Endothelial cell of umbilical vein (primary cell): ENCODE measurements at regions of chr3 and their contacts with region 1.

Region 1: GRCh38 chr3:121979734-121980449 is 42.2 kb downstream of the ILDR1 start:
- DNase-seq: no peak
- H3K4me3 ChIP-seq: no peak overlapping the region
- H3K27ac ChIP-seq: no peak overlapping the region
- H3K4me1 ChIP-seq: no peaks in the 10 kb centered on the region
- H3K27me3 ChIP-seq: peaks cover 0 to 2% of the 10 kb centered on the region in 2 experiments
- CTCF ChIP-seq: no peak
- POLR2A ChIP-seq: no peak

Region 2: DNA sequence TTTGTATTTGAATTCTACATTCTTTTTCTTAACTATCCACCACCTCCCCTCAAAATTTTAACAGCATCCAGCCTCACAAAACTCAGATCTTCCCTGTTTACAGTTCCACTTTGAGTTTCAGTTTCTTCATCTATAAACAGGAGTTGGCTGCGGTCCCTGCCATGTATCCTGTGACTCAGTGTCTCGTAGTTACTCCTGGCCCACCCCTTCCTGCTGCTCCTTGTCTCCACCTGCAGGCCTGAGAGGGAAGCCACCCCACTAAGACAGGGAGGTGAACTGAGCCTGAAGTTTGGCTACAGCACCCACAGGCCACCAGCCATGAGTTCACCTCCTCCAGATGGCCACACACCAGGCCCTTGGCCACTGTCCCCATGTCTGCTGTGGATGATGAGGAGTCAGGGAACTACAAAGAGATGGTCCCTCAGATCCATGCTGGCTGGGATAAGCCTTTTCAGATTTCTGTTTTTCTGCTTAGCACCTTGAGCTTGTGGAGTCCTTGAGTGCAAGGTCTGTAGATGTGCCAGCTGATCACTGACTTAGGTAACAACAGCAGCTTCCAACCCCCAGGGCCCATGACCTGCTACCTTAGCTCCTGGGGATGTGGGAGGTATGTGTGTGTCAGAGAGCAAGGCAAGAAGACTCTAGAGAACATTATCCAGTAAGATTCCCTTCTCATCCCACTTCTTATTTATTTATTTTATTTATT is 112.7 kb after region 1 on chr3:
- CTCF ChIA-PET with region 1: interaction called, 18 read pairs
- POLR2A ChIA-PET with region 1: no interaction called
- dilution Hi-C with region 1: no loop called
- intact Hi-C with region 1: loop called (anchors 1 kb)
- DNase-seq: peak; percentile 34
- H3K4me3 ChIP-seq: no peak overlapping the region
- H3K27ac ChIP-seq: no peak overlapping the region
- H3K4me1 ChIP-seq: peaks cover 6% of the 10 kb centered on the region
- H3K27me3 ChIP-seq: peaks cover 4% of the 10 kb centered on the region in 2 experiments
- CTCF ChIP-seq: peak; percentile 58 to 68
- POLR2A ChIP-seq: no peak

Region 3: GRCh38 chr3:122258757-122259371 is 279.0 kb after region 1 on chr3:
- CTCF ChIA-PET with region 1: interaction called, 16 read pairs
- POLR2A ChIA-PET with region 1: no interaction called
- dilution Hi-C with region 1: no loop called
- intact Hi-C with region 1: loop called (anchors 5 kb)
- DNase-seq: peak; percentile 54
- H3K4me3 ChIP-seq: no peak overlapping the region
- H3K27ac ChIP-seq: no peak overlapping the region
- H3K4me1 ChIP-seq: no peaks in the 10 kb centered on the region
- H3K27me3 ChIP-seq: peaks cover 7 to 11% of the 10 kb centered on the region in 2 experiments
- CTCF ChIP-seq: peak; percentile 56 to 63
- POLR2A ChIP-seq: no peak